Right cardiac atrium (tissue), 5 donors: ENCODE measurements at regions of chr6 and their contacts with region 1.

Region 1: DNA sequence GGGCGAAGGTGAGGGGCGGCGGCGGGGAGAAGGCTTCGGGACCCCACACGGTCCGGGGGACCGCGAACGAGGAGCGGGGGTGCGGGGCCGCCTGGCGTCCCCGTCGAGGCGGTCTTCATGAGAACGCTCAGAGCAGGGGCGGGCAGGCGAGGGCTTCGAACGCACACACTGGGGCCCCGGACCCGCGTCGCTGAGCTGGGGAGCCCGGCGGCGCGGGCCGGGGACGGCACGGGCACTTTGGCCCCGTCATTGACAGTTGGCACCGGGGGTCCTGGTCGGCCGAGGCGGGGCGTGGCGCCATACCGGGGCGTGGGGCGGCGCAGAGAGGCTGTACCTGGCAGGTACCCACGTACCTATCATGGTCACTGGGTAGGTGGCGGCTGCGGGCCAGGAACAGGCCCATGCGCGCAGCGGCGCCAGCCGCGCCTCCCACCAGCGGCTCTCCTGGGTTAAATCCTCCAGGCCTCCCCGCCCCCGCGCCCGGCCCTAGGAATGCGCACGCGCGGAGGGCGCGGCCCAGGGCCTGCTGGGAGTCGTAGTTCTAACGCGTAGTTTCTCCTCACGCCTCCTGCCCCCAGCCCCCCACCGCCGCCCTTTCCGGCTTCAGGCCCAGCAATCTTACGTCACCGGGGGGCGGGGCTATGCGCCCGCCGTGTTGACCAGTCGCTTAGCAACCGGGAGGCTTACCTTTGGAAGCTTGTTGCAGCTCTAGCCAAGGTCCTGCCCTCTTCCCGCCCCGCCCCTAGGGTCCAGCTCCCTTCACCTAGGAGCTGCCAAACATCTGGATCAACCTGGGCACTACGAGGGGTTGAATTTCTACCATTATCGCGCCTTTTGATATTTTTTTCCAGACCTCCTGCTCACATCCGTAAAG is at the starts of genes PACRG and PRKN:
- DNase-seq: peak; percentile 99 to 100 (median 100)
- ATAC-seq: peak; percentile 100
- H3K4me3 ChIP-seq: peak within 1 kb of the TSS; percentile 65
- H3K27ac ChIP-seq: peak within 1 kb of the TSS; percentile 72
- H3K4me1 ChIP-seq: no peaks in the 10 kb centered on the region
- H3K27me3 ChIP-seq: no peaks in the 10 kb centered on the region
- total RNA-seq, gene PACRG: 3.9 to 9.4 (median 4.8) TPM
- total RNA-seq, gene PRKN: 20.2 to 33.0 (median 24.9) TPM

Region 2: DNA sequence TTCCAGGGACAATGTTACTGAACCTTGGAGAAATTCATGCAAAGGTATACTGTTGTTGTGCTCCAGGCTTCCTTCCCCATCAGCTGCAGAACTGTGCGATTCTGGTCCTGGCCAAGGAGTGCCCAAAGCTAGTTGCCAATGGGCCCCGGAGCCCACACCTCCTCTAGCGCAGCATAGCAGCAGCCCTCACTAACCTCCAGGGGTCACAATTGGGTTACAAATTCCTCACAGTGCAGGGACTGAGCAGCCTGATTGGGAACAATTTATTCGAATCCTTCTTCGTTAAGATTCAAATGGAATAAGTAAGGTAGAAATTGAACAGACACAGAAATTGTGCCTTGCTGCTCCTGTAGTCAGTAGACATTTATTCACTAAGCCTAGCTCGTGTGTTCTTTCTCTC is 284.9 kb before region 1 on chr6:
- intact Hi-C with region 1: loop called in 2 of 4 experiments (anchors 10 kb)
- DNase-seq: no peak
- ATAC-seq: peak; percentile 68 to 83
- H3K4me3 ChIP-seq: no peak overlapping the region
- H3K27ac ChIP-seq: no peak overlapping the region
- H3K4me1 ChIP-seq: no peaks in the 10 kb centered on the region
- H3K27me3 ChIP-seq: no peaks in the 10 kb centered on the region

Region 3: GRCh38 chr6:162651505-162651904 is 76.0 kb before region 1 on chr6:
- intact Hi-C with region 1: no loop called
- DNase-seq: no peak
- ATAC-seq: no peak
- H3K4me3 ChIP-seq: no peak overlapping the region
- H3K27ac ChIP-seq: no peak overlapping the region
- H3K4me1 ChIP-seq: peaks cover 1% of the 10 kb centered on the region
- H3K27me3 ChIP-seq: no peaks in the 10 kb centered on the region

Region 4: GRCh38 chr6:162772466-162772865 is 44.9 kb after region 1 on chr6:
- intact Hi-C with region 1: no loop called
- DNase-seq: no peak
- ATAC-seq: no peak
- H3K4me3 ChIP-seq: no peak overlapping the region
- H3K27ac ChIP-seq: no peak overlapping the region
- H3K4me1 ChIP-seq: no peaks in the 10 kb centered on the region
- H3K27me3 ChIP-seq: no peaks in the 10 kb centered on the region